Adrenal gland (tissue), 19 donors: ENCODE measurements at regions of chr9 and their contacts with region 1.

Region 1: DNA sequence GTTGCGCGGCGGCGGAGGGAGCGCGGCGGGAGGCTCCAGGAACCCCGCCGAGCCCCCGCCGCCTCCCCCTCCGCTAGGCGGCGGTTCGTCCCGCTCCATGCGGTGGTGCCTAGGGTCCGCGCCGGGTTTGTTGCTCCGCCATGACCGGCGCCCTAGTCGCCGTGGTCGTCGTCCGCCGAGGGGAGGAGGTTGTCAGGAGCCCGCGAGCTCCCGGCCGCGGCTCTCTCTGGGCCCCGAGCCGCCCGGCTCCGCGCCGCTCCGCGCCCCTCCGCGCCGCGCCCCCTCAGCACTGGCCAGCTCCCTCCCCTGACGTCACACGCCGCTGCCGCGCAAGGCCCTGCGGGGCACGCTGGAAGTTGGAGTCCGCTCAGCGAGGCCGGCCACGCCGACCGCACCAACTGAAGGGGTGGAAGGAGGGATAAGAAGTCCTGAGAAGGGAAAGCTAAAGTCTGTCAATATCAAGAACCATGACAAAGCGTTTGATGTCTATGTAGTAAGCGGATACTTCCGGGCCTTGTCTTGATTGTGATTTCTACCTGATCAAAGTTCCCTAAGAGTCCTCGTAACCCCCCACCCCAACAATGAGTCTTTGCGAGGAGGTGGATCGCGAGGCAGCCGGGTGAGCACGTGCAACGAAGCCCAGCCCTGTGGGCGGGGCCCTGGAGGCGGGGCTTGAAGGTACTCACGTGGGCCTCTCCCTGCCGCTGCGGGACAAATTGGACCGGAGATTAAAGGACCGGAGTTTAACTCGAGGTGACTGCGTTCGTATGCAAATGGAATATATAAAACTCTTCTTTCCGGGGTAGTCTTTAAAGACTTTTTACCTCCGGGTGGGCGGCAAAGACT is at the start of gene NR6A1:
- DNase-seq: peak; percentile 97 to 98 (median 98)
- H3K4me3 ChIP-seq: peak within 1 kb of the TSS in 3 of 4 donors; percentile 13 to 81 (median 71)
- H3K27ac ChIP-seq: peak within 1 kb of the TSS in 4 of 5 donors; percentile 50 to 75 (median 67)
- H3K4me1 ChIP-seq: peaks cover 5 to 12% of the 10 kb centered on the region in 2 donors
- H3K27me3 ChIP-seq: peaks cover 24% of the 10 kb centered on the region
- CTCF ChIP-seq: peak in 3 of 6 experiments; percentile 18 to 30 (median 22)
- POLR2A ChIP-seq: peak in 1 of 2 donors; percentile 31
- total RNA-seq, gene NR6A1: 0.83 to 9.8 (median 1.6) TPM

Region 2: GRCh38 chr9:124800306-124801259 is 29.3 kb after region 1 on chr9:
- intact Hi-C with region 1: no loop called
- DNase-seq: peak in 6 of 7 donors; percentile 57 to 87 (median 72)
- H3K4me3 ChIP-seq: no peak overlapping the region
- H3K27ac ChIP-seq: peak overlapping the region in 1 of 5 donors; percentile 31
- H3K4me1 ChIP-seq: no peaks in the 10 kb centered on the region
- H3K27me3 ChIP-seq: no peaks in the 10 kb centered on the region
- CTCF ChIP-seq: no peak
- POLR2A ChIP-seq: no peak

Region 3: DNA sequence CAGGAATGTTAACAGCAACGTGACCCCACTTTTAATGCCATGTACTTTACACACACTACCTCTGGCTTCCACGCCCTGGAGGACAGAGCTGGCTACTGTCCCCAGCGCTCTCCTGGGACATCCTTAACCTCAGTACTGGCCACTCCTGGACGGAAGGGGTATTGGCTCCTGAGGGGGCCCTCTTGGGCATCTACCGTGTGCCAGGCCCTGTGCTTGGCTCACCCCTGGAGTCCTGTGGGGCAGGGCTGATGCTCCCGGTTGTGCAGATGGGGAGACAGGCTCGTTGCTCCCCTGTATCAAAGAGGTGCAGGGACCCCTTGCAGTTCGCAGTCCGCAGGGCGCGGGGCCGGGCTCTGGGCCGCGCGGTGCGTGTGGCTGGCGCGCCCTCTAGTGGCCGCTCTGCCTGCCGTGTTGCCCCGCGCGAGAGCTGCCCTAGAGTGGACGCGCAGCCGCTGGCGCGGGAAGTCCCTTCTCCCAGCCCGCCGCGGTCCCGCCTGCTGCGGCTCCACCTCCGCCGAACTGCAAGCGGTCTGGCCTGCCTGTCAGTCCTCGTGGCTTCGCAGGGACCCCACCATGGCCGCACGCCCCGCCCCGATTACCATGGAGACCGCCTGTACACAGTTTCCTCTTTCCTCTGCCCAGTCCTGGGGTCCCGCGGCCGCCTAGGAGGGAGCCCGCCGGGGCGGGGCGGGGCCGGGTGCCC is 81.7 kb after region 1 on chr9 and contains the start of gene WDR38:
- intact Hi-C with region 1: loop called (anchors 2 kb)
- DNase-seq: peak; percentile 73 to 87 (median 81)
- H3K4me3 ChIP-seq: peak within 1 kb of the TSS in 2 of 4 donors; percentile 7 to 36
- H3K27ac ChIP-seq: no peak within 1 kb of the TSS
- H3K4me1 ChIP-seq: peaks cover 4 to 12% of the 10 kb centered on the region in 2 donors
- H3K27me3 ChIP-seq: no peaks in the 10 kb centered on the region
- CTCF ChIP-seq: peak; percentile 82 to 100 (median 99)
- POLR2A ChIP-seq: no peak
- total RNA-seq, gene WDR38: not detected